A549 (cell line): ENCODE measurements at regions of chr17 and their contacts with region 1.

Region 1: DNA sequence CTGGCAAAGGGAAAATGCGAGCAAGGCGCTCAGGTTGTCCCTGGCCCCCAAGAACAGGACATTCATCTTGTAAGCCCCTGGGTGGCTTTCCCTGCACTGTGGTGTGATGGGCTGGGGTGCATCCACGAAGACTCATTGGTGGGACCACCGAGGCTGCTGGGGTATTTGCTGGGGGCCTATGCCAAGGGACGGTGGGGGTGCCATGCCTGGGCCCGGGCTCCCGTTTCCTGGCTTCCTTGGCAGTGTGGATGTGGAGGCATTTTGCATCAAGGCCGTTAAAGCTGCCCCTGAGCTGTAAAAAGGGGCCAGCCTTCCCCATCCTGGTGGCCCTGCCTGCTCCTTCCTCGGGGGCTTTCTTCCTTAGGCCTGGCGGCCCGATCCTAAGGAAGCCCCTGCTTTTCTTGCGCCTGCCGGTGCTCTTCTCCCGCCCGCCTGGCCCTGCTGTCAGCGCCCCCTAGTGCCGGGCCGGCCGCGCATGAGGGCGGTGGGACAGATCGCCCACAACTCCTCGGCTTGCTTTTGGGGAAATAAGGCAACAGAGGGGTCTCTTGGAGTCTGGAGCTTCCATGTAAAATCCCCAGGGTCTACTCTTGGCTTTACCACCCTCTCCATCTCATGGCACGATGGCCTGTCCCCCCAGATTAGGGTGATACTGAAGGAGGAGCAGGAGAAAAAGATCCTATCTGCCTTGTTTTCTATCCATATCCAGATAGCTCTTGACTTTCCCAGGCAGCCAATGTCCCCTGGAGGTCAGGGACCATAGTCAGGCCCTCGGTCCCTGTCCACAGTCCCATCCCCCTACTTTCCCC is 9.8 kb upstream of the TBX2 start:
- DNase-seq: peak; percentile 58 to 72
- ATAC-seq: peak; percentile 59 to 88
- H3K4me3 ChIP-seq: no peak overlapping the region
- H3K27ac ChIP-seq: peak overlapping the region; percentile 40 to 75; a peak in 5 of 6 replicates
- H3K4me1 ChIP-seq: peaks cover 7% of the 10 kb centered on the region; the same call in 2 of the 3 replicates
- CTCF ChIP-seq: peak; percentile 97
- EP300 ChIP-seq: no peak
- POLR2A ChIP-seq: no peak
- RAD21 ChIP-seq: peak; percentile 92 to 97

Region 2: GRCh38 chr17:60959011-60959410 is 430.9 kb before region 1 on chr17:
- CTCF ChIA-PET with region 1: no interaction called
- POLR2A ChIA-PET with region 1: no interaction called
- DNase-seq: no peak
- ATAC-seq: no peak
- H3K4me3 ChIP-seq: no peak overlapping the region
- H3K27ac ChIP-seq: no peak overlapping the region
- H3K4me1 ChIP-seq: peaks cover 15% of the 10 kb centered on the region; the same call in 2 of the 3 replicates
- CTCF ChIP-seq: no peak
- EP300 ChIP-seq: no peak
- POLR2A ChIP-seq: no peak
- RAD21 ChIP-seq: no peak

Region 3: GRCh38 chr17:60971515-60972369 is 418.1 kb before region 1 on chr17:
- CTCF ChIA-PET with region 1: interaction called, 10 read pairs
- POLR2A ChIA-PET with region 1: no interaction called
- DNase-seq: peak; percentile 37 to 73
- ATAC-seq: peak; percentile 89 to 96
- H3K4me3 ChIP-seq: no peak overlapping the region
- H3K27ac ChIP-seq: no peak overlapping the region
- H3K4me1 ChIP-seq: peaks cover 7% of the 10 kb centered on the region; the same call in 1 of the 3 replicates
- CTCF ChIP-seq: peak; percentile 79
- EP300 ChIP-seq: no peak
- POLR2A ChIP-seq: no peak
- RAD21 ChIP-seq: peak; percentile 81 to 88

Region 4: DNA sequence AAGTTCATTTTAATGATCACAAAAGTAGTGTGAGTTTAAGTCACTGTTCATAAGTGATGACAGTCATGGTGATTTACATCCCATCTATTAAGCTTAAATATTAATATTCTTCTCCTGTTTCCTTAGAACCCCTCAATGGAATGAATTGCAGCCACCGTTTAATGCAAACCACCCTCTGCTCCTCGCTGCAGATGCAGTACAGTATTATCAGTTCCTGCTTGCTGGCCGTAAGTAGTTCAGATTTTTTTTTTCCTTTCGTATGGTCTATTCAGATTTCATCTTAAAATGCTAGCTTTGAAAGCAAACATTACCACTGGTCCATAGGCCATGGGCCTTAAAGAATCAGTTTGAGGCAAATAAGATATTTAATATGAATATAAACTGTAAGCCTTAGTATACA is 349.2 kb before region 1 on chr17:
- CTCF ChIA-PET with region 1: interaction called, 10 read pairs
- POLR2A ChIA-PET with region 1: no interaction called
- DNase-seq: no peak
- ATAC-seq: no peak
- H3K4me3 ChIP-seq: no peak overlapping the region
- H3K27ac ChIP-seq: no peak overlapping the region
- H3K4me1 ChIP-seq: no peaks in the 10 kb centered on the region
- CTCF ChIP-seq: no peak
- EP300 ChIP-seq: no peak
- POLR2A ChIP-seq: no peak
- RAD21 ChIP-seq: no peak

Region 5: GRCh38 chr17:61338000-61338798 is 51.7 kb before region 1 on chr17:
- CTCF ChIA-PET with region 1: interaction called, 20 read pairs
- POLR2A ChIA-PET with region 1: no interaction called
- DNase-seq: peak; percentile 60 to 65
- ATAC-seq: peak; percentile 37 to 64; a peak in 4 of 6 replicates
- H3K4me3 ChIP-seq: no peak overlapping the region
- H3K27ac ChIP-seq: peak overlapping the region; percentile 45 to 64
- H3K4me1 ChIP-seq: peaks cover 48% of the 10 kb centered on the region
- CTCF ChIP-seq: no peak
- EP300 ChIP-seq: peak in 1 of 2 experiments; percentile 33; a peak in 1 of 5 replicates
- POLR2A ChIP-seq: no peak
- RAD21 ChIP-seq: no peak; a peak in 2 of 5 replicates

Region 6: GRCh38 chr17:61366715-61367413 is 23.0 kb before region 1 on chr17:
- CTCF ChIA-PET with region 1: interaction called, 26 read pairs
- POLR2A ChIA-PET with region 1: no interaction called
- DNase-seq: no peak
- ATAC-seq: no peak
- H3K4me3 ChIP-seq: no peak overlapping the region
- H3K27ac ChIP-seq: no peak overlapping the region
- H3K4me1 ChIP-seq: 0 out of 3 replicates have a peak, but pooled peaks cover 5% of the 10 kb centered on the region
- CTCF ChIP-seq: no peak
- EP300 ChIP-seq: no peak
- POLR2A ChIP-seq: no peak
- RAD21 ChIP-seq: no peak

Region 7: DNA sequence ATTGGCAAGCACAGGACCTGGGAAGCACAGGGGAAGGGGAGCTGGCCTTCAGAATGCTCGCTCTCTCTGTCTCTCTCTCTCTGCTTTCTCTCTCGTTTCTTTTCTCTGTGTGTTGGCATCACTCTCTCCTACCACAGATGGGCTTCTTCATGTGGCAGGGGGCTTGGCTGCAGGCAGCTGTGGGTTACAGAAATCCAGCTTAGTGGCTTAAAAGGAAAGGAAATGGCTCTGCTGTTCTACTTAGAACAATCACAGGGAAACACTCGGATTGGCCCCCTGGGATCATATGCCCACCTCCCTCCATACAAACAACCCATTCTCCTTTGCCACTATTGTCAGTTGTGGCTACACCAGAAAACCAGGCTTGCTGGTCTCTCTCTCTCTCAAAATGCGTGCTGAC is 30.2 kb after region 1 on chr17:
- CTCF ChIA-PET with region 1: no interaction called
- POLR2A ChIA-PET with region 1: no interaction called
- DNase-seq: no peak
- ATAC-seq: no peak
- H3K4me3 ChIP-seq: no peak overlapping the region
- H3K27ac ChIP-seq: peak overlapping the region in 1 of 2 experiments; percentile 4; a peak in 1 of 6 replicates
- H3K4me1 ChIP-seq: peaks cover 11% of the 10 kb centered on the region; the same call in 2 of the 3 replicates
- CTCF ChIP-seq: no peak
- EP300 ChIP-seq: no peak
- POLR2A ChIP-seq: no peak
- RAD21 ChIP-seq: no peak

Region 8: GRCh38 chr17:61451538-61452300 is 61.8 kb after region 1 on chr17:
- CTCF ChIA-PET with region 1: no interaction called
- POLR2A ChIA-PET with region 1: no interaction called
- DNase-seq: no peak
- ATAC-seq: no peak
- H3K4me3 ChIP-seq: no peak overlapping the region
- H3K27ac ChIP-seq: no peak overlapping the region
- H3K4me1 ChIP-seq: no peaks in the 10 kb centered on the region
- CTCF ChIP-seq: no peak
- EP300 ChIP-seq: no peak
- POLR2A ChIP-seq: no peak
- RAD21 ChIP-seq: no peak

Region 9: GRCh38 chr17:61556224-61557188 is 166.6 kb after region 1 on chr17:
- CTCF ChIA-PET with region 1: no interaction called
- POLR2A ChIA-PET with region 1: no interaction called
- DNase-seq: no peak
- ATAC-seq: peak in 1 of 2 experiments; percentile 42; a peak in 1 of 6 replicates
- H3K4me3 ChIP-seq: peak overlapping the region; percentile 10; the same call in 1 of the 3 replicates
- H3K27ac ChIP-seq: peak overlapping the region; percentile 34 to 60
- H3K4me1 ChIP-seq: peaks cover 26% of the 10 kb centered on the region
- CTCF ChIP-seq: no peak
- EP300 ChIP-seq: no peak
- POLR2A ChIP-seq: no peak
- RAD21 ChIP-seq: no peak